Colonic mucosa (tissue), 4 donors: ENCODE measurements at regions of chr1 and their contacts with region 1.

Region 1: DNA sequence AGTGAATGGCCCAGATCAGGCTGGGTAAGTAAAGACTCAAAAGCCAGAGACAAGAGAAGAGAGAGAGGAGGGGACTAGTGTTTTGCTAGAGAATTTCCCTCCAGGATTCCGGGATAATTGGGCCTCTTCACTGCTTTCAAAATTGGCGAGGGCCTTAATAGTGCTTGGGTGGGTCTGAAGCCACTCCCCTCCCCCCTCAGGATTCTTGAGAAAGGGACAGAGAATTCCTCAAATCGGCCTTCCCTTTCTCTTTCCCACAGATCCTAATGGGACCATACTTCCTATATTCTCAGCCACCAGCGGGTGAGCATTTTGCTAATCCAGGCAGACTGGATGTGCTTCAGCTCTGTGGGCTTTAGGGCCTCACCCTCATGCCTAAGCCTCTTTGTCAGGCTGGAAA is 11.9 kb downstream of the SFN start:
- DNase-seq: no peak
- H3K4me3 ChIP-seq: no peak overlapping the region
- H3K27ac ChIP-seq: no peak overlapping the region
- H3K4me1 ChIP-seq: no peaks in the 10 kb centered on the region
- H3K27me3 ChIP-seq: no peaks in the 10 kb centered on the region
- CTCF ChIP-seq: no peak

Region 2: GRCh38 chr1:26602378-26602959 is 272.4 kb before region 1 on chr1:
- intact Hi-C with region 1: loop called (anchors 5 kb)
- DNase-seq: peak; percentile 69
- H3K4me3 ChIP-seq: no peak overlapping the region
- H3K27ac ChIP-seq: no peak overlapping the region
- H3K4me1 ChIP-seq: no peaks in the 10 kb centered on the region
- H3K27me3 ChIP-seq: no peaks in the 10 kb centered on the region
- CTCF ChIP-seq: peak; percentile 88

Region 3: DNA sequence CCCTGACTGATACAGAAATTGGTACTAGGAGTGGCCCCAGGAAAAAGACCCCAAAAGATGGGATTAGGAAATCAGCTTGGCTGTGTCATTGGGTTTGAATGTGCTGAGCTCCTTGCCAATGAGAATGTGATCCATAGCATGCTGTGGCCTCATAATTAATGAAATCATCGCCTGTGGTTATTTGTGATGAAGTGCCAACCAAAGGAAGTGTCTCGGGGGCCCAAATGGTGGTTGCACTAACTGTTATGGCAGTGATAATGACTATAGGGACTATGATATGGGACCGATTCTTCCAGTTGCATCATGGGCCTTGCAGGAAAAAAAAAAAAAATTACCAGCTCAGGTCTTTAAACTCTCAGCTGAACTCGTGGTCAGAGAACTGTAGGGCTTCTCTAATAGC is 63.8 kb before region 1 on chr1:
- intact Hi-C with region 1: loop called (anchors 5 kb)
- DNase-seq: no peak
- H3K4me3 ChIP-seq: no peak overlapping the region
- H3K27ac ChIP-seq: no peak overlapping the region
- H3K4me1 ChIP-seq: no peaks in the 10 kb centered on the region
- H3K27me3 ChIP-seq: no peaks in the 10 kb centered on the region
- CTCF ChIP-seq: no peak

Region 4: DNA sequence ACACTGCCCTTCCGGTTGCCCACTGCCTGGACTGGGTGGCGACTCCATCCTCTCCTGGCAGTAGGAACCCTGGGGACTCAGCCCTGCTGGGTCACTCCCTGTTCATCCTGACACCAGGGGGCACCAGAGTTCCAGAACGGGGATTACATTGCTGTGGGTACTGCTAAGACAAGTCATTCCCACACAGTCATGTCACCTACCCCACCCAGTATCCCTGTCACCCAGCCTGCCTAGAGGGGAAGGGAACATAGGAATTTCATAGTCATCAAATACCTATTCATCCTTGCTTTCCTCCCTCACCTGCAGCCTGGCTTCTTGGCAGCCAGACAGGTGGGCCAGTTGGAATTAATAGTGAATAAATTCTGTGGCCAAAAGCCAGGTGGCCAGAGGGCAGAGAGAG is 21.7 kb before region 1 on chr1:
- intact Hi-C with region 1: loop called (anchors 2 kb)
- DNase-seq: peak; percentile 97
- H3K4me3 ChIP-seq: no peak overlapping the region
- H3K27ac ChIP-seq: no peak overlapping the region
- H3K4me1 ChIP-seq: peaks cover 22% of the 10 kb centered on the region
- H3K27me3 ChIP-seq: no peaks in the 10 kb centered on the region
- CTCF ChIP-seq: peak; percentile 81

Region 5: DNA sequence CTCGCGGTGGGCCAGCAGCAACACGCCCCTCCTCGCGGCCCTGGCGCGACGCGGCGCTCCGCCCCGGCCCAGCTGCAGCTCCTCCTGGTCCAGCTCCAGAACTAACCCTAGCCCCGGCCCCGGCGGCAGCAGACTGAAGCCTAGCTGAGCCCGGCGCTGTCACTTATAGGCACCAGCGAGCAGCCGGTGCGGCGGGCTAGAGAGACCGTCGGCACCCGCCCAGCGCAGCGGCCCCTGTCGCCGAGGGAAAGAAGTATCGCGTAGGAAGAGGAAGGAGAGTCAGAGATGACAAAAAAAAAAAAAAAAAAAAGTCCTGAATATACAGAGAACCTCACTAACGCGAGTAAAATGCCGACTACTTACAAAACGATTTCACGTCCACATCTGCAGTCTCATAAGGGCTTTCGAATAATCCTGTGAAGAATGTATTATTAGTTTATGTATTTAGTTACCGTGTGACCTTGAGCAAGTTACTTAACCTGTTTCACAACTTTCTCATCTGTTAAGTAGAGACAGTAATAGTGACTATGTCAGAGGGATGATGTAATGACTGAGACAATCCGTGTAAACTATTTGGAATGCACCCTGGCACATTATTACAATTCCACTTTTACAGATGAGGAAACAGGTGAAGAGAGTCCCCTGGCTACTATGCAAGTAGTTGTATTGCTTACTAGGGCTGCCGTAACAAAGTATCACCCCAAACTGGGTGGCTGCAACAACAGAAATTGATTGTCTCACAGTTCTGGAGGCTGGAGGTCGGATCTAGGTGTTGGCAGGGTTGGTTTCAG is 280.3 kb after region 1 on chr1 and contains the start of gene SLC9A1:
- intact Hi-C with region 1: no loop called
- DNase-seq: peak; percentile 96
- H3K4me3 ChIP-seq: peak within 1 kb of the TSS; percentile 83
- H3K27ac ChIP-seq: peak within 1 kb of the TSS; percentile 65
- H3K4me1 ChIP-seq: peaks cover 29% of the 10 kb centered on the region
- H3K27me3 ChIP-seq: no peaks in the 10 kb centered on the region
- CTCF ChIP-seq: peak; percentile 76
- total RNA-seq, gene SLC9A1: 63.6 to 99.6 TPM